ENCODE measurements at regions of chrX and their contacts with region 1.

Region 1: DNA sequence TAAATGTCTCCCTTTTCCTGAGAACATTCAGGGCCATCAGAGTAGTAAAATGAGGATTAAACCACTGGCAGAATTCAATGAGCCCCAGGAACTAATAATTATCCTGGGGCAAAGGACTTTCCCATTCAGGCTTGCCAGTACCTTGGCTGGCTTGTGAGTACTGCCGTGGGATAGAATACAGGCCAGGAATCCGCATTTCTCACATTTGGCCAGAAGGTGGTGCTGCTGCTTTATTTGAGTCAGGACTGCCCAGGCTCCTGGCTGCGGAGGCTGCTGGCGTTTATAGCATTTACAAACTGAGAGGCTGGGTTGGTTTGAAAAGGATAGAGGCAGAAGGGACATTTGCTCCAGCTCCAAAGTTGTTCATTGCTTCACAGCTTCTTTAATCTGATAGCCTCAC is 91.4 kb downstream of the RTL9 start:
- DNase-seq: peak; percentile 79 to 90 (median 82)
- ATAC-seq: peak; percentile 85
- H3K4me3 ChIP-seq: no peak overlapping the region
- H3K27ac ChIP-seq: no peak overlapping the region
- H3K4me1 ChIP-seq: no peaks in the 10 kb centered on the region
- H3K27me3 ChIP-seq: no peaks in the 10 kb centered on the region
- CTCF ChIP-seq: peak; percentile 56 to 88 (median 65)
- POLR2A ChIP-seq: no peak

Region 2: GRCh38 chrX:110036162-110037033 is 413.7 kb before region 1 on chrX:
- intact Hi-C with region 1: no loop called
- DNase-seq: no peak
- ATAC-seq: no peak
- H3K4me3 ChIP-seq: no peak overlapping the region
- H3K27ac ChIP-seq: no peak overlapping the region
- H3K4me1 ChIP-seq: peaks cover 18% of the 10 kb centered on the region
- H3K27me3 ChIP-seq: no peaks in the 10 kb centered on the region
- CTCF ChIP-seq: no peak
- POLR2A ChIP-seq: no peak

Region 3: DNA sequence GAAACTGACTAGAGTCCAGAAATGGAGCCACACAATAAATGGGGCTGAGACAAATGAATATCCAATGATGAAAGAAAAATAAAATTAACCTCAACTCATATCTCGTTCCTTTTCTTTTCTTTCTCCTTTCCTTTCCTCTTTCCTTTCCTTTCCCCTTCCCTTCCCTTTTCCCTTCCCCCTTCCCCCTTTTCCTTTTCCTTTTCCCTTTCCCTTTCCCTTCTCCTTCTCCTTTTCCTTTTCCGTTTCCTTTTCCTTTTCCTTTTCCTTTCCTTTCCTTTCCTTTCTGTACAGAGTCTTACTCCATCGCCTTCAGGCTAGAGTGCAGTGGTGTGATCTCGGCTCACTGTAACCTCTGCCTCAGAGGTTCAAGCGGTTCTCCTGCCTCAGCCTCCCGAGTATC is 54.9 kb after region 1 on chrX:
- intact Hi-C with region 1: no loop called
- DNase-seq: no peak
- ATAC-seq: no peak
- H3K4me3 ChIP-seq: no peak overlapping the region
- H3K27ac ChIP-seq: no peak overlapping the region
- H3K4me1 ChIP-seq: no peaks in the 10 kb centered on the region
- H3K27me3 ChIP-seq: no peaks in the 10 kb centered on the region
- CTCF ChIP-seq: no peak
- POLR2A ChIP-seq: no peak

Region 4: GRCh38 chrX:110569506-110569905 is 119.5 kb after region 1 on chrX:
- intact Hi-C with region 1: no loop called
- DNase-seq: no peak
- ATAC-seq: no peak
- H3K4me3 ChIP-seq: no peak overlapping the region
- H3K27ac ChIP-seq: no peak overlapping the region
- H3K4me1 ChIP-seq: no peaks in the 10 kb centered on the region
- H3K27me3 ChIP-seq: no peaks in the 10 kb centered on the region
- CTCF ChIP-seq: no peak
- POLR2A ChIP-seq: no peak

Region 5: DNA sequence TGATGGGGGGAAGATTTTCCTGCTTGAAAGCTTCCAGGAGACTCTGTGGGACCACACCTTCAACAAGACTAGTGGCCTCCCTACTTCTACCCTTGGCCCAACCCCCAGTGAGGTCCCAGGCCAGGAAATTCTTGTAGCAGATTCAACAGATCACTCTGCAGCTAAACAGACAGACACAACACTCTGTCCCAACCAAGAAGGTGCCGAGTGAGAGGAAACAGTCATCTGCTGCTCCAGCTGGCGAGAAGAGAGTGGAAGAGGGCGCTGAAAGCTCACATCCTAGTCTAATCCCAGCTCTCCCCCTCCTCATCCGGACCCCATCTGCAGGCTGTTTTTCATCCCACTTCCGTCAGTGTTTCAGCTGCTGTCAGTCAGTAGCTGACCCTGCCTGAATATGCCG is 282.2 kb after region 1 on chrX:
- intact Hi-C with region 1: no loop called
- DNase-seq: peak in 1 of 4 donors; percentile 1
- ATAC-seq: no peak
- H3K4me3 ChIP-seq: no peak overlapping the region
- H3K27ac ChIP-seq: no peak overlapping the region
- H3K4me1 ChIP-seq: no peaks in the 10 kb centered on the region
- H3K27me3 ChIP-seq: no peaks in the 10 kb centered on the region
- CTCF ChIP-seq: no peak
- POLR2A ChIP-seq: no peak

Region 6: DNA sequence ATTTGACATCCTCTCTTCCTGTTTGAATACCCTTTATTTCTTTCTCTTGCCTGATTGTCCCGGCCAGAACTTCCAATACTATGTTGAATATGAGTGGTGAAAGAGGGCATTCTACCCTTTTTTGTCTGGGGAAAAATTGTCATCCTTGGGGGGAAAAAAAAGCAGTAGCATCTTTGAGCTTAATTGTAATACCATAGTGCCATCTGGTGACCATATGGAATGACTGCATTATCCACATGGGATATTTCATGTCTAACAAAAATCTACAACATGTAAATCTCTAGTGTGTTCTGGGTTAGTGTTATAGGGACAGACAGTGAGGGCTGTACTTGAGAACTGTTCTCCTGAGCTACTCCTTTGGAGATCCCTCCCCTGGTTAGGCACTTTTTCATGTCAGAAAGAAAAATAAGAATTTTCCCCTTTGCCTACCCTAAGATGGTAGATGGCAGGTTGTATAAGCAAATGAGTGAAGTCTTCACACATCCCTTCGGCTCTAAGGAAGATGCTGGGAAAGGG is 794.2 kb after region 1 on chrX:
- intact Hi-C with region 1: loop called (anchors 10 kb)
- DNase-seq: no peak
- ATAC-seq: no peak
- H3K4me3 ChIP-seq: no peak overlapping the region
- H3K27ac ChIP-seq: no peak overlapping the region
- H3K4me1 ChIP-seq: no peaks in the 10 kb centered on the region
- H3K27me3 ChIP-seq: no peaks in the 10 kb centered on the region
- CTCF ChIP-seq: peak in 5 of 7 experiments; percentile 11 to 50 (median 34)
- POLR2A ChIP-seq: no peak

Measured in body of pancreas (tissue), 4 donors.